WTC11 (cell line): ENCODE measurements at regions of chr12 and their contacts with region 1.

Region 1: GRCh38 chr12:2944401-2945047 is 14.7 kb upstream of the TEAD4 start:
- DNase-seq: peak; percentile 90
- ATAC-seq: peak; percentile 98
- H3K4me3 Mint-ChIP-seq: no peak overlapping the region
- H3K27ac Mint-ChIP-seq: peak overlapping the region; percentile 3; the same call in 1 of the 2 replicates
- H3K4me1 Mint-ChIP-seq: peaks cover 3% of the 10 kb centered on the region
- H3K27me3 Mint-ChIP-seq: peaks cover 3% of the 10 kb centered on the region; the same call in 1 of the 2 replicates
- CTCF ChIP-seq: peak; percentile 87

Region 2: GRCh38 chr12:2853626-2854025 is 90.9 kb before region 1 on chr12:
- CTCF ChIA-PET with region 1: interaction called, 30 read pairs
- POLR2A ChIA-PET with region 1: interaction called, 5 read pairs
- DNase-seq: peak; percentile 95
- ATAC-seq: peak; percentile 93
- H3K4me3 Mint-ChIP-seq: no peak overlapping the region
- H3K27ac Mint-ChIP-seq: no peak overlapping the region
- H3K4me1 Mint-ChIP-seq: peaks cover 3% of the 10 kb centered on the region; the same call in 1 of the 2 replicates
- H3K27me3 Mint-ChIP-seq: no peaks in the 10 kb centered on the region; the same call in 1 of the 2 replicates
- CTCF ChIP-seq: peak; percentile 88

Region 3: GRCh38 chr12:2884810-2885209 is 59.7 kb before region 1 on chr12:
- CTCF ChIA-PET with region 1: interaction called, 92 read pairs
- POLR2A ChIA-PET with region 1: no interaction called
- DNase-seq: no peak
- ATAC-seq: no peak
- H3K4me3 Mint-ChIP-seq: no peak overlapping the region
- H3K27ac Mint-ChIP-seq: peak overlapping the region; percentile 91
- H3K4me1 Mint-ChIP-seq: peaks cover 12% of the 10 kb centered on the region
- H3K27me3 Mint-ChIP-seq: no peaks in the 10 kb centered on the region
- CTCF ChIP-seq: no peak

Region 4: GRCh38 chr12:2912216-2912575 is 32.3 kb before region 1 on chr12:
- CTCF ChIA-PET with region 1: interaction called, 12 read pairs
- POLR2A ChIA-PET with region 1: no interaction called
- DNase-seq: no peak
- ATAC-seq: peak; percentile 58
- H3K4me3 Mint-ChIP-seq: no peak overlapping the region
- H3K27ac Mint-ChIP-seq: peak overlapping the region; percentile 77
- H3K4me1 Mint-ChIP-seq: peaks cover 38% of the 10 kb centered on the region
- H3K27me3 Mint-ChIP-seq: no peaks in the 10 kb centered on the region
- CTCF ChIP-seq: no peak

Region 5: DNA sequence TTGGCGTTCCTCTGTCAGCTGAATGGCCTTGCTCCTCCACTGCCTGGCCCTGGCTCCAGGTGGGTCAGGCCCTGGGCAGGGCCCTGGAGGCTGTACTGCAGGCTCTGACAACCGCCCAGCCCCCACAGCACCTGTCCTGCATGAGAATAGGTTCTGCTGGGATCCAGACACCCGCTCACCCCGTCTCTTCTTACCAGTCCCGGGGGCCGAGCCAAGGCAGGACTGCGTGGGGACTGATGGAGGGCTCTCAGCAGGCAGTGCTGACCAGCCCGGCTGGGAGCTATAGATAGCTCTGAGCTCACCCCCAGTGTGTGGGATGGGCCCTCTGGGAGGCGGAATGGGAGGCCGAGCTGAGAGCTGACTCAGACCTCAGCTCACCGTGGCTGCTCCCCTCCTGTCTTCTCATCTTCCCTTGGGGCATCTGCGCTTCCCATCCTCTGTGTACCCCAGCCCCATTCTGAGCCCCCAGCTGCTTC is 54.3 kb after region 1 on chr12:
- CTCF ChIA-PET with region 1: interaction called, 10 read pairs
- POLR2A ChIA-PET with region 1: no interaction called
- DNase-seq: peak; percentile 68
- ATAC-seq: peak; percentile 75
- H3K4me3 Mint-ChIP-seq: peak overlapping the region; percentile 40
- H3K27ac Mint-ChIP-seq: peak overlapping the region; percentile 92
- H3K4me1 Mint-ChIP-seq: peaks cover 49% of the 10 kb centered on the region
- H3K27me3 Mint-ChIP-seq: no peaks in the 10 kb centered on the region
- CTCF ChIP-seq: no peak

Region 6: GRCh38 chr12:3041558-3042164 is 97.1 kb after region 1 on chr12:
- CTCF ChIA-PET with region 1: interaction called, 10 read pairs
- POLR2A ChIA-PET with region 1: no interaction called
- DNase-seq: peak; percentile 76
- ATAC-seq: peak; percentile 68
- H3K4me3 Mint-ChIP-seq: no peak overlapping the region
- H3K27ac Mint-ChIP-seq: 0 out of 2 replicates have a peak overlapping the region, but pooled peaks have one; percentile 19
- H3K4me1 Mint-ChIP-seq: peaks cover 4% of the 10 kb centered on the region; the same call in 1 of the 2 replicates
- H3K27me3 Mint-ChIP-seq: no peaks in the 10 kb centered on the region
- CTCF ChIP-seq: peak; percentile 62; the same call in 1 of the 2 replicates